H1 (cell line): ENCODE measurements at regions of chr1 and their contacts with region 1.

Region 1: DNA sequence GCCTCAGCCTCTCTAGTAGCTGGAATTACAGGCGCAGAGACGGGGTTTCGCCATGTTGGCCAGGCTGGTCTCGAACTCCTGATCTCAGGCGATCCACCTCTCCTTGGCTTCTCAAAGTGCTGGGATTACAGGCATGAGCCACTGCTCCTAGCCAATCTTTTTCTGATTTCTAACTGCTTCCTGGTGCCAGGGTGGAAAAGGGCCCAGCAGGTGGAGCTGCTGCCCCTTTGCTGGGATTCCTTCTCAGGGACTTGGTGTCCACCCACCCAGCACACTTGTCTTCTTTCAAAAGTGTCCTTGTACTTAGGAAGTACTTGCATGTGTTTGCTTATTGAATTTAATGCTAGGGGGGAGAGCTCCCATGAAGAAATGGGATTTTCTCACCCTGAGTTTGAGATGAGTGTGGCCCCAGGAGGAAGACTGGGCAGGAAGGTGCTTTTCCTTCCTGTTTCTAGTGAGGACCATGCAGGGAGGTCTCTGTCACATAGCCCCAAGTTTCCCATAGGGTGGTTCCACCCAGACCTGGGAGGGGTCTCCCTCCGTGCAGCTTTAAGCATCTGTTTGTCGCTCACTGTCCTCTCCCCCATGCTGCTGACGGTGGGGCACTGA is 14.2 kb downstream of the UTP11 start:
- DNase-seq: no peak
- H3K4me3 ChIP-seq: no peak overlapping the region
- H3K27ac ChIP-seq: no peak overlapping the region
- H3K4me1 ChIP-seq: peaks cover 12 to 36% (median 25%) of the 10 kb centered on the region in 4 experiments
- H3K27me3 ChIP-seq: no peaks in the 10 kb centered on the region
- CTCF ChIP-seq: peak; percentile 77 to 86 (median 80)
- EP300 ChIP-seq: no peak
- POLR2A ChIP-seq: no peak
- RAD21 ChIP-seq: peak; percentile 89 to 92

Region 2: DNA sequence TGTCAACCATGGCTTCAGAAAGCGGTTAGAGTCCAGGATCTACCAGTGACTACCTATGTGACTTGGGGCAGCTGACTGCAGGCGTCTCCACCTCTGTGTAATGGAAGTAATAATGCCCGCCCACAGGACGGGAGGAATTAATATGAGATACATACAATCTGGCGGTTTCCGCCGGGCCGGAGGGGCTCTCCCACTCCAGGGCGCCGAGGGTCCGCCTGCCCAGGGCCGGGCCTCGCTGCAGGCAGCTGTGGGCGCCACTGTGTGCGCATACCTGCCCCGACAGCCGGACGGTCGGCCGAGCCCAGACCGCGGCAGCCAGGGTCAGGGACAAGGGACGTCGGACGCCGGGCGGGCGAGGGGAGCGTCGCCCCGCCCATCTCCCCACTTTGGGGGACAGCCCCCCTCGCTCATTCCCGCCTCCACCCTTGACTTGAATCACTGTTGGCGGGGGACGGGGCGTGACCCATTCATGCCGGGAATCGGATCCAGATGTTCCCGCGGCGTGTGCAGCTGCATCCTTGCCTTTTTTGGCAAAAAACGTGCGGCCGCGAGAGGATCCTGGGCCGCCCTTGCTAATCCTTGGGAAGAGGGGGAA is 30.8 kb before region 1 on chr1:
- CTCF ChIA-PET with region 1: interaction called, 211 read pairs
- POLR2A ChIA-PET with region 1: interaction called, 11 read pairs
- DNase-seq: peak; percentile 87 to 89
- H3K4me3 ChIP-seq: peak overlapping the region; percentile 39 to 65 (median 58)
- H3K27ac ChIP-seq: peak overlapping the region; percentile 86
- H3K4me1 ChIP-seq: peaks cover 0 to 29% (median 24%) of the 10 kb centered on the region in 4 experiments; a peak in 6 of 7 replicates
- H3K27me3 ChIP-seq: no peaks in the 10 kb centered on the region; a peak in 1 of 7 replicates
- CTCF ChIP-seq: no peak
- EP300 ChIP-seq: peak in 1 of 2 experiments; percentile 75; a peak in 1 of 3 replicates
- POLR2A ChIP-seq: peak; percentile 87 to 90
- RAD21 ChIP-seq: peak in 1 of 2 experiments; percentile 0; a peak in 1 of 4 replicates

Region 3: DNA sequence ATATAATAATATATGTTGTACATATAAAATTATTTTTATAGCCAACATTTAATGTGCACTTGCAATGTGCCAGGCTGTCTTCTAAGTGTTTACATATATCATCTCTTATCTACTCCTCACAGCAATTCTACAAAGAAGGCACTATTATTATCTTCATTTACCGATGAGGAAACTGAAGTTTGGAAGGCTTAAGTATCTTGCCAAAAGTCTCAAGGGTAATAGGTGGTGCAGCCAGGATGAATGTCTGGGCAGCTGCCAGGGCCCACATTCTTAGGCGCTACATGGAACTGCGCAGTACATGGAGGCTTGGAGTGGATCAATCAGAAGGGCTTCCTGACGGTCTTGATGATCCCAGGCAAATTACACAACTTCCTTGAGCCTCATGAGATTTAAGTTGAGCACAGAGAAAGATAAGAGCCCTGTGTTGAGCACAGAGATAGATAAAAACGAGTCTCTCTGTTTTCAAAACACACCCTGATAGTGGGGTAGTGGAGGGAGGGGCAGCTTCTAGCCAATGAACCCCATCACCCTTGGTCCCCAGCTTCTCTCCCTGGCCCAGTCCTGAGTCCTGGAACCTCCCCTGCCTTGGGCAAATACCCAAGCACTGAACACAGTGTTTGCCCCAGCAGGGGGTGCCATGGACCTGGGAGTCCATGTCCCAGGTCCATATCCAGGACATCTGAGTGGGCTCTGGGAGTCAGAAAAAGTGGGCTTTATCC is 10.7 kb after region 1 on chr1:
- CTCF ChIA-PET with region 1: interaction called, 37 read pairs
- POLR2A ChIA-PET with region 1: interaction called, 59 read pairs
- DNase-seq: no peak
- H3K4me3 ChIP-seq: no peak overlapping the region
- H3K27ac ChIP-seq: no peak overlapping the region
- H3K4me1 ChIP-seq: no peaks in the 10 kb centered on the region; a peak in 2 of 7 replicates
- H3K27me3 ChIP-seq: no peaks in the 10 kb centered on the region
- CTCF ChIP-seq: no peak
- EP300 ChIP-seq: no peak
- POLR2A ChIP-seq: no peak
- RAD21 ChIP-seq: peak in 1 of 2 experiments; percentile 37; a peak in 2 of 4 replicates

Region 4: GRCh38 chr1:38071312-38072256 is 44.9 kb after region 1 on chr1:
- CTCF ChIA-PET with region 1: interaction called, 88 read pairs
- POLR2A ChIA-PET with region 1: interaction called, 4 read pairs
- DNase-seq: no peak
- H3K4me3 ChIP-seq: no peak overlapping the region
- H3K27ac ChIP-seq: no peak overlapping the region
- H3K4me1 ChIP-seq: peaks cover 4 to 20% (median 15%) of the 10 kb centered on the region in 4 experiments
- H3K27me3 ChIP-seq: no peaks in the 10 kb centered on the region
- CTCF ChIP-seq: peak in 2 of 3 experiments; percentile 74; a peak in 3 of 4 replicates
- EP300 ChIP-seq: no peak
- POLR2A ChIP-seq: no peak
- RAD21 ChIP-seq: peak; percentile 49 to 67

Region 5: DNA sequence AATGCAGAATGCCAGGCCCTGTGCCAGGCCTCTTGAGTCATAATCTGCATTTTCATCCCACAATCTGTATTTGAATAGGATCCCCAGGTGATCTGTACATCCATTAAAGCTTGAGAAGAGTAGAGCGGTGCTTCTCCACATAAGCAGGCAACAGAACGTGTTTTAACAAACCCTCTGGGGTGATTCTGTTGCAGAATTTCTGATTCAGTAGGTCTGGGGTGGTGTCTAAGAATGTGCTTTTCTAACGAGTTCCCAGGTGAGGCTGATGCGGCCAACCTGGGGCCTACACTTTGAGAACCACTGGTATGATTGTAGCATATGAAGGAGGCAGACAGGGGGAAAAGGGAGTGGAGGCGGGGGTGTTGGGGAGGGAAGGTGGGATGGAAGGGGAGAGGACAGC is 98.3 kb after region 1 on chr1:
- CTCF ChIA-PET with region 1: no interaction called
- POLR2A ChIA-PET with region 1: no interaction called
- DNase-seq: no peak
- H3K4me3 ChIP-seq: no peak overlapping the region
- H3K27ac ChIP-seq: no peak overlapping the region
- H3K4me1 ChIP-seq: peaks cover 0 to 4% (median 3%) of the 10 kb centered on the region in 4 experiments; a peak in 4 of 7 replicates
- H3K27me3 ChIP-seq: no peaks in the 10 kb centered on the region; a peak in 1 of 7 replicates
- CTCF ChIP-seq: no peak
- EP300 ChIP-seq: no peak
- POLR2A ChIP-seq: no peak
- RAD21 ChIP-seq: no peak

Region 6: DNA sequence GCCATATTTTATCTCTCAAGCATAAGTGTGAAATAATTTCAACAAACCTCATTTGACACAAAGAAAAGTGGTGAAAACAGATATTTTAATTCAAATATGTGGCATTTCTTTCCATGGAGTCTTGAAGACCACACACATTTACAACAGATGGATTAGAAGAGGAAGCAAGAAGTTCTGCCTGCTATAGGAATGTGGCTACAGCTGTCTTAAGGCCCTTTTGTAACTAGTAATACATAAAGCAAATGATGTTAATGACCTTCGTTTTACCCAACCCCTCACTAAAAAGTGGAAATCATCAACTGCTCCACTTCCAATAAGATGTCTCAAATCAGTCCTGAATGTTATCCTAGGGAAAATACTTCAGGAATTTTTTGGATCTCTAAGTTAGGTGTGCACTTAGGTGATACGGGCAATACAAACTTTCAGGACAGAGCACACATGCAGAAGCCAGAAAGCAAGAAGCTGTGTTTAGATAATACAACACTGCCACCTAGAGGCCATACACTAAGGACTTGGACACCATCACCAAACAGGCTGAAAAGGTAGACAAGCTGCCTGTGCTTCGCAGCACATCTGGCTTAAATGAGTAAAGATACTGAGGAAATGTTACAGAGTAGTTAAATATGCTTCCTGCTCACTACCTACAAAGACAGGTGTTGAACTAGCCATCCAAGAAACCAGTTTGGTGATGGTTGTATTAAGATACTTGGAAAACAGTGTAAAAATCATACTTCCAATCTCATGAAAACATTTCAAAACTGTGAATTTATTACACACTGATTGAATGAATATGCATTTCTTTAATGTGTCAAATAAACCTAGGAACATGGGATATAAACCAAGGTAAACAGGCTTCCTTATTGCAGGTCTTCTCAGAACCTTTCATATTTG is 808.5 kb after region 1 on chr1:
- CTCF ChIA-PET with region 1: interaction called, 12 read pairs
- POLR2A ChIA-PET with region 1: no interaction called
- DNase-seq: no peak
- H3K4me3 ChIP-seq: no peak overlapping the region
- H3K27ac ChIP-seq: no peak overlapping the region
- H3K4me1 ChIP-seq: peaks cover 0 to 2% (median 0%) of the 10 kb centered on the region in 4 experiments; a peak in 3 of 7 replicates
- H3K27me3 ChIP-seq: no peaks in the 10 kb centered on the region
- CTCF ChIP-seq: peak; percentile 21 to 91 (median 78)
- EP300 ChIP-seq: no peak
- POLR2A ChIP-seq: no peak
- RAD21 ChIP-seq: peak; percentile 94 to 96